ENCODE measurements at regions of chr19 and their contacts with region 1.

Region 1: DNA sequence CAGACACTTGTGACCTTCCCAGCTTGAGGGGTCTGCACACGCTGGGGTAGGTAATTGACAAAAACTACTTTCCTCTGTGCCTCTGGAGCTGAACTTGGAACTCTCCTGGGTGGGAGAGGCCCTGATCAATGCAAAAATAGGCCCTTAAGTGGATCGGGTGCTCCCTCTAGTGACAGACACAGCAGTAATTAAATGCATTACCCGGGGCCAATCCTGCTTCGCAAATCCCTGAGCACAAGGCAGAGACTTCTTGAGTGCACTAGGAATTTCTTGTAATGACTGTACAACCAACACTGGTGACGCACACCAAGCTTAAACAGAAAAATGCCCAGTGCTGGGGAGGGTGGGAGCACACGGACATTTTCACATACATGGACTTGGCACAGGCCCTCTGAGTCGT is 10.6 kb upstream of the UBE2S start:
- DNase-seq: no peak
- H3K4me3 ChIP-seq: no peak overlapping the region
- H3K27ac ChIP-seq: no peak overlapping the region
- H3K4me1 ChIP-seq: peaks cover 0 to 17% (median 0%) of the 10 kb centered on the region in 6 donors
- H3K27me3 ChIP-seq: peaks cover 0 to 27% (median 0%) of the 10 kb centered on the region in 7 donors
- CTCF ChIP-seq: peak in 10 of 11 experiments; percentile 36 to 72 (median 62)
- POLR2A ChIP-seq: no peak

Region 2: DNA sequence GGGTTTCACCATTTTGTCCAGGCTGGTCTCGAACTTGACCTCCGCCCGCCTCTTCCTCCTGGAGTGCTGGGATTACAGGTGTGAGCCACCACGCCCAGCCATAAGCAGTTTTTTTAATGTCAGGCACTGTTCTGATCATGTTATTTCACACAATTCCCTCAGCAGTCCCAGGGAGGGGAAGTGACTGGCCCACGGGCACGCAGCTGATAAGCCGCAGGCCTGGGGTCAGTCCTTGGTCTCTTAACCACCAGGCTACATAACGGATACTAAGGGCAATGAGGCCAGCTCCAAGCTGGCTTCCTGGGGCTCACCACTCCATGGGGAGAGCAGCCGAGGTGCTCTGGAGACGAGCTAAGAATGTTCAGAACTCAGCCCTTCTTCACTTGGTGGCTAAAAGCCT is 120.9 kb before region 1 on chr19:
- intact Hi-C with region 1: loop called (anchors 10 kb)
- DNase-seq: no peak
- H3K4me3 ChIP-seq: no peak overlapping the region
- H3K27ac ChIP-seq: no peak overlapping the region
- H3K4me1 ChIP-seq: peaks cover 0 to 12% (median 10%) of the 10 kb centered on the region in 6 donors
- H3K27me3 ChIP-seq: peaks cover 0 to 10% (median 0%) of the 10 kb centered on the region in 7 donors
- CTCF ChIP-seq: no peak
- POLR2A ChIP-seq: no peak

Measured in spleen (tissue), 13 donors.